ENCODE measurements at regions of chr11 and their contacts with region 1.

Region 1: GRCh38 chr11:123062158-123062891 is 389 bp upstream of the HSPA8 start:
- DNase-seq: peak; percentile 98 to 100 (median 99)
- ATAC-seq: peak; percentile 85 to 88 (median 86)
- H3K4me3 ChIP-seq: peak overlapping the region; percentile 98
- H3K4me3 Mint-ChIP-seq: peak overlapping the region; percentile 98 to 99 (median 99)
- H3K27ac ChIP-seq: peak overlapping the region; percentile 99
- H3K27ac Mint-ChIP-seq: peak overlapping the region; percentile 100
- H3K4me1 ChIP-seq: peaks cover 50 to 54% of the 10 kb centered on the region in 2 experiments
- H3K4me1 Mint-ChIP-seq: peaks cover 54 to 73% (median 64%) of the 10 kb centered on the region in 3 donors
- H3K27me3 ChIP-seq: no peaks in the 10 kb centered on the region
- H3K27me3 Mint-ChIP-seq: no peaks in the 10 kb centered on the region

Region 2: DNA sequence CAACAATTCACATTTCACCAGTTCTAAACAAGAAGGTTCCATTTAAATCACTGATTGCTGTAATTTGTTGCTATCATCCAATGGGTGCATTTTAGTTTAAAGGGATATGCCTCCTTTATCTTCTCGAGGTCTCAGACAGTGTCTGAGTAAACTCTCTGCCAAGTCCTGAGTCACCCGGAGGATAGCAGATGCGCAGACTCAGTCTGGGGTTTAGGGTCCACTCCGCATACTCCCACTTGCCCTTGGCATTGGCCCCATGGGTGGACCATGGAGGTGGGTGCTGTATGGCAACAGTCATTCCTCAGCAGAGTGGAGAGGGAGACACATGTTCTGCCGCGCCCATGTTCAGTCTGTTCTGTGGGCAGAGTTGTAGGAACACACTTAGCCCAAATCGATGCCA is 289.4 kb before region 1 on chr11:
- CTCF ChIA-PET with region 1: no interaction called
- POLR2A ChIA-PET with region 1: no interaction called
- DNase-seq: no peak
- ATAC-seq: no peak
- H3K4me3 ChIP-seq: no peak overlapping the region
- H3K4me3 Mint-ChIP-seq: no peak overlapping the region
- H3K27ac ChIP-seq: no peak overlapping the region
- H3K27ac Mint-ChIP-seq: no peak overlapping the region
- H3K4me1 ChIP-seq: peaks cover 0 to 6% of the 10 kb centered on the region in 2 experiments
- H3K4me1 Mint-ChIP-seq: peaks cover 19 to 35% (median 32%) of the 10 kb centered on the region in 3 donors
- H3K27me3 ChIP-seq: no peaks in the 10 kb centered on the region
- H3K27me3 Mint-ChIP-seq: no peaks in the 10 kb centered on the region

Region 3: GRCh38 chr11:123083623-123084029 is 21.3 kb after region 1 on chr11:
- CTCF ChIA-PET with region 1: interaction called in 1 of 2 experiments, 6 read pairs
- POLR2A ChIA-PET with region 1: interaction called, 7 to 11 read pairs
- DNase-seq: peak; percentile 12 to 80 (median 50)
- ATAC-seq: peak; percentile 38 to 57 (median 50)
- H3K4me3 ChIP-seq: peak overlapping the region in 1 of 2 donors; percentile 26
- H3K4me3 Mint-ChIP-seq: peak overlapping the region; percentile 62 to 63 (median 63)
- H3K27ac ChIP-seq: peak overlapping the region; percentile 80
- H3K27ac Mint-ChIP-seq: peak overlapping the region; percentile 81 to 84
- H3K4me1 ChIP-seq: peaks cover 14 to 48% of the 10 kb centered on the region in 2 experiments
- H3K4me1 Mint-ChIP-seq: peaks cover 60 to 65% (median 62%) of the 10 kb centered on the region in 3 donors
- H3K27me3 ChIP-seq: no peaks in the 10 kb centered on the region
- H3K27me3 Mint-ChIP-seq: no peaks in the 10 kb centered on the region

Region 4: DNA sequence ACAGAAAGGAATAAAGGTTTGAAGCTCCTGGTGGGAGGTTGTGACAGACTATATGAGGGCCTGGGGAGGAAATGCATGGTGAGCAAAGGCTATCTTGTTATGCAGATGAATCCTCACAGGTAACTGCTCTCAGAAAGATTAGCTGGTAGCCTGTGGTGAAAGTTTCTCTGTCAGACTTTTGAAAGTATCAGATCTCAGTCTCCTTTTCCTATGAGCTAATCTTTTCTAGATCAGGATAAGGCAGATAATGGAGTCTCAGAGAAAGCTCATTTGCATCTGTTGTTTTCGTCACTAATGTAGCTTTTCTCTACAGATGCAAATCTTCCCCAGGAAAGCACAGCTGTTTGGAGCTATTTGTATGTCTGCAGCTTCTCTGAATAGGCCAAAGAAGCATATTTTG is 713.0 kb after region 1 on chr11:
- CTCF ChIA-PET with region 1: no interaction called
- POLR2A ChIA-PET with region 1: no interaction called
- DNase-seq: no peak
- ATAC-seq: no peak
- H3K4me3 ChIP-seq: no peak overlapping the region
- H3K4me3 Mint-ChIP-seq: no peak overlapping the region
- H3K27ac ChIP-seq: no peak overlapping the region
- H3K27ac Mint-ChIP-seq: no peak overlapping the region
- H3K4me1 ChIP-seq: no peaks in the 10 kb centered on the region
- H3K4me1 Mint-ChIP-seq: no peaks in the 10 kb centered on the region
- H3K27me3 ChIP-seq: peaks cover 0 to 2% of the 10 kb centered on the region in 2 experiments
- H3K27me3 Mint-ChIP-seq: peaks cover 7 to 9% of the 10 kb centered on the region in 2 donors